Aorta (tissue), 5 donors: ENCODE measurements at regions of chr16 and their contacts with region 1.

Region 1: GRCh38 chr16:81314603-81315270 is at the start of gene GAN:
- DNase-seq: peak; percentile 97 to 98
- ATAC-seq: peak; percentile 98
- H3K4me3 ChIP-seq: peak within 1 kb of the TSS; percentile 86 to 93
- H3K27ac ChIP-seq: peak within 1 kb of the TSS in 1 of 2 donors; percentile 88
- H3K4me1 ChIP-seq: peaks cover 0 to 3% of the 10 kb centered on the region in 2 donors
- H3K27me3 ChIP-seq: no peaks in the 10 kb centered on the region
- total RNA-seq, gene GAN: 11.5 to 11.9 TPM

Region 2: DNA sequence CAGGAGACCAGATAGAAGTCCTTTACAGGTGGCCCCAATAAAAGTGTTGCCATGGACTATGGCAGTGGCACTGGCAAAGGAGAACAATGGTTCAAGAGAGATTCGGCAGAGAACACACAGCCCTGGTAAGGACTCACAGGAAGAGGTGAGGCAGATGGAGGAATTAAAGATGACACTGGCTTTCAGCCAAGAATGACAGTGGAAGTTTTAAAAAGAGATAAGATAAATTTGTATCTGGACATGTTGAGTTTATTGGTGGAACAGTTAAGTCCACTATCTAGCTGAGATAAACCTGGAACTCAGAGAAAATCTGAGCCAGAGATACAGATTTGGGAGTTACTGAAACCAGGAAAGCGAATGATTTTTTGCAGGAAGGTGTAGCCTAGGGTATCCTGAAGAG is 328.2 kb before region 1 on chr16:
- intact Hi-C with region 1: no loop called
- DNase-seq: no peak
- ATAC-seq: no peak
- H3K4me3 ChIP-seq: no peak overlapping the region
- H3K27ac ChIP-seq: no peak overlapping the region
- H3K4me1 ChIP-seq: no peaks in the 10 kb centered on the region
- H3K27me3 ChIP-seq: no peaks in the 10 kb centered on the region

Region 3: GRCh38 chr16:81181013-81181720 is 133.6 kb before region 1 on chr16:
- intact Hi-C with region 1: loop called in 1 of 2 experiments (anchors 10 kb)
- DNase-seq: peak; percentile 91 to 93
- ATAC-seq: peak; percentile 89
- H3K4me3 ChIP-seq: no peak overlapping the region
- H3K27ac ChIP-seq: peak overlapping the region; percentile 47 to 75
- H3K4me1 ChIP-seq: no peaks in the 10 kb centered on the region
- H3K27me3 ChIP-seq: no peaks in the 10 kb centered on the region